Calu3 (cell line): ENCODE measurements at regions of chr17 and their contacts with region 1.

Region 1: DNA sequence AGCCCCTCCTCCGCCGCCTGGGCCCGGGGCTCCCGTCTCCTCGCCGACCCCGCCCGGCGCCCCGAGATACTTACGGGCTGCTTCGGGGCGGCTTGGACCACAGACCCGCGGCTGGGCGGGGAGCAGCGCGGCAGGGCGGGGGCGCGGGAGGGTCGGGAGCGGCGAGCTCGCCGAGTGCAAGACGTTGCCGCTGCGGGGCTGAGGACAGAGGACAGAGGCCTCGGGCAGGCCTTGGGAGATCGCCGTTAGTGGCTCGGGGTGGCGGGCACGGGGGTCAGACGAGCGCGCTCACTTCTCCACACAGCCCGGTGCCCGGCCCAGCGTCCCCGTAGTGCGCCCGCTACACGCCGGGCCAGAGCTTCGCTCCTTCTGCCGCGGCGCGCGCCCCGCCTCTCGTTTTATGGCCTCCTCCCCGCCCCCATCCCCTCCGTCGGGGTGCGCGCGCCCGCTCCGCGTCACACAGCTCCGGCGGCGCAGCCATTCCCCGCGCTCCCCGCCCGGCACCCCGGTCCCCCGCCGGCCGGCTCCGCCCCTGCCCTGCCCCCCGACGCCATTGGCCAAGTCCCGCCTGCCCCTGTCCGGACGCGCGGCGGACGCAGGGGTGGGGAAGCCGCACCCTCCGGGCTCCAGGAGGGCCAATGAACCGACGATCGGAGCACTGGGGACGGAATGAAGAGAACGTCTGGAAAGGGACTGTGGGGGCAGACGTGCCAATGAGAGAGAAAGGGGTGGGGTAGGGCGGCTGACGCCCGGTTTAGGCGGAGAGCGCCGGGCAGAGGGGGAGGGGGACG is at the start of gene TOB1:
- DNase-seq: peak; percentile 100
- H3K4me3 Mint-ChIP-seq: peak within 1 kb of the TSS; percentile 78
- H3K27ac Mint-ChIP-seq: peak within 1 kb of the TSS; percentile 100
- H3K4me1 Mint-ChIP-seq: peaks cover 29% of the 10 kb centered on the region
- H3K27me3 Mint-ChIP-seq: no peaks in the 10 kb centered on the region
- CTCF ChIP-seq: no peak
- total RNA-seq, gene TOB1: 177 and 241 TPM in 2 replicates

Region 2: DNA sequence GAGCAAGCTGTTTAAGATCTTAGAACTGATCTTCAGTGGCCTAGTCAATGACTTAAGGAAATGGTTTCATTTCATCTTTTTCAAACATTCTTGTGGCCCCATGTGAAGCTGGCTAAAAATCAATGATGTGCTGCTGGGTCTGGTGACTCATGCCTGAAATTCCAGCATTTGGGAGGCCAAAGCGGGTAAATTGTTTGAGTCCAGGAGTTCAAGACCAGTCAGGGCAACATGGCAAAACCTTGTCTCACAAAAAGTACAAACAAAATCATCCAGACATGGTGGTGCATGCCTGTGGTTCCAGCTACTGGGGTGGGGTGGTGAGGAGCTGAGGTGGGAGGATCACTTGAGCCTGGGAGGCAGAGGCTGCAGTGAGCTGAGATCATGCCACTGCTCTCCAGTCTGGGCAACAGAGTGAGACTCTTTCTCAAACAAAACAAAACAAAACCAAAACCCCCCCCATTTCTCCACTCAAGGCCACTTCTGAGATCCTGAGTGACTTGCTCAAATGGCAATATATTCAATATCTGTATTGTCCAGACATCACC is 647.3 kb before region 1 on chr17:
- CTCF ChIA-PET with region 1: no interaction called
- intact Hi-C with region 1: no loop called
- DNase-seq: peak; percentile 73
- H3K4me3 Mint-ChIP-seq: peak overlapping the region; percentile 47
- H3K27ac Mint-ChIP-seq: no peak overlapping the region
- H3K4me1 Mint-ChIP-seq: peaks cover 51% of the 10 kb centered on the region
- H3K27me3 Mint-ChIP-seq: peaks cover 17% of the 10 kb centered on the region
- CTCF ChIP-seq: no peak

Region 3: GRCh38 chr17:50853015-50853615 is 13.1 kb before region 1 on chr17:
- CTCF ChIA-PET with region 1: interaction called, 36 read pairs
- intact Hi-C with region 1: loop called (anchors 1 kb)
- DNase-seq: no peak
- H3K4me3 Mint-ChIP-seq: peak overlapping the region; percentile 14
- H3K27ac Mint-ChIP-seq: peak overlapping the region; percentile 20
- H3K4me1 Mint-ChIP-seq: peaks cover 19% of the 10 kb centered on the region
- H3K27me3 Mint-ChIP-seq: no peaks in the 10 kb centered on the region
- CTCF ChIP-seq: no peak

Region 4: GRCh38 chr17:50893183-50893993 is 27.2 kb after region 1 on chr17:
- CTCF ChIA-PET with region 1: interaction called, 19 read pairs
- intact Hi-C with region 1: loop called (anchors 2 kb)
- DNase-seq: peak; percentile 86
- H3K4me3 Mint-ChIP-seq: peak overlapping the region; percentile 64
- H3K27ac Mint-ChIP-seq: peak overlapping the region; percentile 98
- H3K4me1 Mint-ChIP-seq: peaks cover 76% of the 10 kb centered on the region
- H3K27me3 Mint-ChIP-seq: no peaks in the 10 kb centered on the region
- CTCF ChIP-seq: no peak

Region 5: DNA sequence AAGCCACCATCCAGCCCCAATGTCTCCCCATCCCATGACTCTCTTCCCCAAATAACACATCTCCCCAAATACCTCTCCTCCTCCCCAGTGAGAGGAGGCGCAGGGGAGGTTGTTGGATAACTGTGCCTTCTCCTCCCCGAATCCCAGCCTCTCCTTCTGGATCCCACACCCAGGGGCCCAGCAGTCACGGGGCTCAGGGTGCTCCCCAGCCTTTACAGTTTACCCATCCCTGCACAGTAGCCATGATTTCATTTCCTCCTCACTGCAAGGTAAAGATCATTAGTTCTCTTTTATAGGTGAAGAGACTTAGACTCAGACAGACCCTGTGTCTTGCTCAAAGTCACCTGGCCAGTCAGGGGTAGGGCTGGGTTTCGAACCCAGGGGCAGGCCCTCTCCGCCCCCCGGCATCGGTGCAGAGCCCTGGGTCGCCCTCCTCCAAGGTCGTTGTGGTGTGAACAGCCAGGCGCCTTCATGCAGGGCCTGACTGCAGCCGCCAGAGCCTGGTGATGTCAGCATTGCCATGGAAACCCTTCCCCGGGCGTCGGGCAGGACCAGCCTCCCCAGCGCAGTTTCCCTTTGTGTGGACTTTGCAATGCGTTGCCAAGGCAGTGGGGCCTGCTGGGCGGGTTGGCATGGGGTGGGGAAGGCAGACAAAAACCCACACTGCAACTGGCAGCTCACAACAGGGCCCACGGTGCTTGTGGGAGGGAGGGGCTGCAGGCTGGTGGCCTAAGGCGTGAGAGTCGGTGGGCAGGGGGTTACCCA is 53.3 kb after region 1 on chr17:
- CTCF ChIA-PET with region 1: interaction called, 8 read pairs
- intact Hi-C with region 1: loop called (anchors 1 kb)
- DNase-seq: peak; percentile 99
- H3K4me3 Mint-ChIP-seq: peak overlapping the region; percentile 39
- H3K27ac Mint-ChIP-seq: peak overlapping the region; percentile 96
- H3K4me1 Mint-ChIP-seq: peaks cover 74% of the 10 kb centered on the region
- H3K27me3 Mint-ChIP-seq: no peaks in the 10 kb centered on the region
- CTCF ChIP-seq: no peak

Region 6: DNA sequence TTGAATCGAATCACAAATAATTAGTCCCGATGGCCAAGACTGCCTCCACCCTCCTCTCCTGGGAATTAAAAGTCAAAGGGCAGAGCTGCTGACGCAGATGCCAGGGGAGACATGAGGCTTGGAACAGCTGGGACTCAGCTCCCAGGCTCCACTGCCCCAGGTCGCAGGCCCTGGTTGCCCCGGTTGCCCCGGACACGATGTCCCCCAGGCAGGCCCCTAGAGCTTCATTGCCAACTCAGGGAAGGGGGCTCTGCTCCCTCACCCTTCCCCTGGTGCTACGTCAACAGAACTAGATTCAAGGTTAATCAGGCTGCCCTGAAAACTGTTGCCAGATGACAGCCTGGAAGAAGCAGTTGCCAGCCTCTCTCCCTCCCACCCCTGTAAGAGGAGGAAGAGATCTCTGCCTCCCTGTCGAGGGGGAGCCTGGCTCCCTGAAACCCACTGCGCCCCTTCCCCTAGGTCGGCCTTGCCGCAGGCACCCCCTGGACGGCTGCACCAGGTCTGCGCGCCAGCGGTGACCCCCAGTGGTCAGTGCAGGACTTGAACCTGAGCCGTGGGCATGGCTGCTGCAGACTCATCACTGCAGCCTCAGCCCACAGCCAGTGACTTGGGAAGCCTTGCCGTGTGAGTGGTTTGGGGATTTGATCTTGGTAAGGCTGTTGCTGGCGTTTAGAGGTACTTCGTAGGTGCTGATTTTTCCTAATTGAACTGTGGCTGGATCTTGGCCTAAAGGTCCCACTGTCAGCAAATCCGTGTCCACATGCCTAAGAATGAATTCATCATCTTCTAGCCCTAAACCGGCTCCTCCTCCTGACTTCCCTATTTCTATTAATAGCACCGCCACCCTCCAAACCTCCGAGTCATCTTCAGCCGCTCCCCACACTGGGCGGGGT is 84.1 kb after region 1 on chr17:
- CTCF ChIA-PET with region 1: interaction called, 68 read pairs
- intact Hi-C with region 1: loop called (anchors 1 kb)
- DNase-seq: peak; percentile 89
- H3K4me3 Mint-ChIP-seq: peak overlapping the region; percentile 26
- H3K27ac Mint-ChIP-seq: peak overlapping the region; percentile 19
- H3K4me1 Mint-ChIP-seq: peaks cover 58% of the 10 kb centered on the region
- H3K27me3 Mint-ChIP-seq: no peaks in the 10 kb centered on the region
- CTCF ChIP-seq: peak; percentile 94

Region 7: GRCh38 chr17:51147650-51148049 is 281.5 kb after region 1 on chr17:
- CTCF ChIA-PET with region 1: interaction called, 15 read pairs
- intact Hi-C with region 1: loop called (anchors 10 kb)
- DNase-seq: no peak
- H3K4me3 Mint-ChIP-seq: no peak overlapping the region
- H3K27ac Mint-ChIP-seq: no peak overlapping the region
- H3K4me1 Mint-ChIP-seq: peaks cover 24% of the 10 kb centered on the region
- H3K27me3 Mint-ChIP-seq: no peaks in the 10 kb centered on the region
- CTCF ChIP-seq: no peak